ENCODE measurements at regions of chr13 and their contacts with region 1.

Region 1: DNA sequence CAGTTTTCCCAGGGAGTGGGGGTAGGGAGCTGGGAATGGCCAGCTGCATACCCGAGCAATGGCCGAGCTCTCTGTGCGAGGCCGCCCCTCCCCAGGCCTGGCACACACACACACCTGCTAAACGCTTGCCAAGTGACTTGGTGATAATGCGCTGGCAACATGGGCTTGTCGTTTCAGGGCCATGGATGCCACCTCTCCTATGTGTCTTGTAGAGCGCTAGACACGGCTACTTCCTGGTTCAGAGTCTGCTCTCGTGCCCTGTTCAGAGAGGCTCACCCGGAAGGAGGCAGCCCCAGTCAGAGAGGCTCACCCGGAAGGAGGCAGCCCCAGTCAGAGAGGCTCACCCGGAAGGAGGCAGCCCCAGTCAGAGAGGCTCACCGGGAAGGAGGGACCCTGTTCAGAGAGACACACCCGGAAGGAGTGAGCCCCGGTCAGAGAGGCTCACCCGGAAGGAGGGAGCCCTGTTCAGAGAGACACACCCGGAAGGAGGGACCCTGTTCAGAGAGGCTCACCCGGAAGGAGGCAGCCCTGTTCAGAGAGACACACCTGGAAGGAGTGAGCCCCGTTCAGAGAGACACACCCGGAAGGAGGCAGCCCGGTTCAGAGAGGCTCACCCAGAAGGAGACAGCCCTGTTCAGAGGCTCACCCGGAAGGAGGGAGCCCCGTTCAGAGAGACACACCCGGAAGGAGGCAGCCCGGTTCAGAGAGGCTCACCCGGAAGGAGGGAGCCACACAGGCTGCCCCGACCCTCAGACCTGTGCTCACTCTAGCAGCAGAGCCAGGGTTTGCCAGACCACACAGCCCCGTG is 4.2 kb downstream of the ADPRHL1 start:
- DNase-seq: no peak
- H3K4me3 ChIP-seq: no peak overlapping the region
- H3K27ac ChIP-seq: no peak overlapping the region
- H3K4me1 ChIP-seq: peaks cover 0 to 5% (median 0%) of the 10 kb centered on the region in 4 experiments; a peak in 2 of 7 replicates
- H3K27me3 ChIP-seq: no peaks in the 10 kb centered on the region
- CTCF ChIP-seq: no peak
- EP300 ChIP-seq: no peak
- POLR2A ChIP-seq: no peak
- RAD21 ChIP-seq: no peak

Region 2: DNA sequence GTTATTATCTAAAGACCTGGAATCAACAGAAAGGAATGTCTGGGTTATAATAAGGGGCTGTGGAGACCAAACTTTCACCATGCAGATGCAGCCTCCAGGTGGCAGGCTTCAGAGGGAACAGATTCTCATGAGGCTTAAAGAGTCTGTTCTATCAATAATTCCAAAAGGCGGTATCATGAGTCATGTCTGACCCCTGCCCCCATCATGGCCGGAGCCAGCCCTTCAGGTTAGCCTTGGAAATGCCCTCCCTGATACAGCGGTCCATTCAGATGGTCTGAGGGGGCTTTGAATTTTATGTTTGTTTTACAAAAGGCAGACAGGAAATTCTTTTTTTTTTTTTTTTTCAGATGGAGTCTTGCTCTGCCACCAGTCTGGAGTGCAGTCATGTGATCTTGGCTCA is 173.7 kb before region 1 on chr13:
- CTCF ChIA-PET with region 1: interaction called, 12 read pairs
- POLR2A ChIA-PET with region 1: no interaction called
- DNase-seq: peak in 1 of 2 experiments; percentile 59
- H3K4me3 ChIP-seq: no peak overlapping the region
- H3K27ac ChIP-seq: no peak overlapping the region
- H3K4me1 ChIP-seq: no peaks in the 10 kb centered on the region
- H3K27me3 ChIP-seq: no peaks in the 10 kb centered on the region
- CTCF ChIP-seq: peak; percentile 29 to 61 (median 57)
- EP300 ChIP-seq: no peak
- POLR2A ChIP-seq: no peak
- RAD21 ChIP-seq: peak; percentile 55 to 62

Region 3: DNA sequence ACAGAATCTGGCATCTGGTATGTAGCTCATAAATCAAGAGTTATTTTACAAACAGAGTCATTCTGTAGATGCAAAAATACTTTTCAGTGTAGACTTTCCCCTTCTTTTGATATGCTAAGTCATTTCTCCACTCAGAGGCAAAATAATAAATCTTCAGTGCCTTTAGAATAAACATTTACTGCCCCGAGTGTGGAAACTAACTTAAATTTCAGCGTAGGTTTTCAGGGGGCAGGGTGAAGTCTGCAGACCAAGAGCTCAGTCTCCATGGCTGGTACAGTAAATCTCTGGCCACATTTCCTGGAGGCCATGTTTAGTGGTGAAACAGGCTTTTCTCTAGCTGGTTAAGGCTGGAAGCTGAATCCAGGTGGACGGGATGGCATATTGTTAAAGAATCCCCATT is 17.3 kb after region 1 on chr13:
- CTCF ChIA-PET with region 1: interaction called, 18 read pairs
- POLR2A ChIA-PET with region 1: no interaction called
- DNase-seq: no peak
- H3K4me3 ChIP-seq: no peak overlapping the region
- H3K27ac ChIP-seq: no peak overlapping the region
- H3K4me1 ChIP-seq: peaks cover 0 to 15% (median 5%) of the 10 kb centered on the region in 4 experiments; a peak in 6 of 7 replicates
- H3K27me3 ChIP-seq: no peaks in the 10 kb centered on the region
- CTCF ChIP-seq: no peak
- EP300 ChIP-seq: no peak
- POLR2A ChIP-seq: no peak
- RAD21 ChIP-seq: no peak

Region 4: GRCh38 chr13:113483504-113484293 is 34.6 kb after region 1 on chr13:
- CTCF ChIA-PET with region 1: interaction called, 20 read pairs
- POLR2A ChIA-PET with region 1: interaction called, 8 read pairs
- DNase-seq: no peak
- H3K4me3 ChIP-seq: no peak overlapping the region
- H3K27ac ChIP-seq: no peak overlapping the region
- H3K4me1 ChIP-seq: peaks cover 0 to 4% (median 1%) of the 10 kb centered on the region in 4 experiments; a peak in 4 of 7 replicates
- H3K27me3 ChIP-seq: no peaks in the 10 kb centered on the region
- CTCF ChIP-seq: no peak
- EP300 ChIP-seq: no peak
- POLR2A ChIP-seq: no peak
- RAD21 ChIP-seq: no peak

Region 5: GRCh38 chr13:113490496-113491417 is 41.7 kb after region 1 on chr13 and contains the start of gene DCUN1D2:
- CTCF ChIA-PET with region 1: interaction called, 20 read pairs
- POLR2A ChIA-PET with region 1: interaction called, 8 read pairs
- DNase-seq: peak; percentile 65 to 94
- H3K4me3 ChIP-seq: peak within 1 kb of the TSS; percentile 82 to 95 (median 91)
- H3K27ac ChIP-seq: peak within 1 kb of the TSS; percentile 55; the same call in 1 of the 2 replicates
- H3K4me1 ChIP-seq: peaks cover 3 to 18% (median 12%) of the 10 kb centered on the region in 4 experiments
- H3K27me3 ChIP-seq: no peaks in the 10 kb centered on the region
- CTCF ChIP-seq: no peak
- EP300 ChIP-seq: peak in 1 of 2 experiments; percentile 10; a peak in 1 of 3 replicates
- POLR2A ChIP-seq: peak in 1 of 2 experiments; percentile 69; a peak in 1 of 3 replicates
- RAD21 ChIP-seq: no peak
- total RNA-seq, gene DCUN1D2: 35.2 and 35.3 TPM in 2 replicates